ENCODE measurements at regions of chr5 and their contacts with region 1.

Region 1: DNA sequence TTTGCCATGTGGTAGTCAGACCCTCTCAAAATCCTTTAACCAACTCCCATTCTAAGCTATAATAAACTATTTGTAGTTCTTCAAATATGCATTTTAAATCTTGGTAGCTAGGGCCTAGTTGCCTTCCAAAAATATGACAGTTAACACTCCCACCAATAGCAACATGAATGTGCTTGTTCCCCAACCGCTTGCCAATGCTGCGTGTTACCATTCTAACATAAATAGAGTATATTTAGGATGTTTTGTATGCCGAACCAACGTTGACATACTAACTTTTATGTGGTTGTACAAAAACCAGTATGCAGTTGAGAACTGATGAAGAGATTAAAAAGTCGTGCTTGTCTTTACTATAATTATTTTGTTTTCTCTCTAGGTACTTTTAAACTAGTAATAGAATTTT is 9.0 kb downstream of the UBE2B start:
- DNase-seq: no peak
- H3K4me3 ChIP-seq: no peak overlapping the region
- H3K27ac ChIP-seq: no peak overlapping the region
- H3K4me1 ChIP-seq: peaks cover 5 to 20% of the 10 kb centered on the region in 2 donors
- H3K27me3 ChIP-seq: no peaks in the 10 kb centered on the region
- CTCF ChIP-seq: no peak
- POLR2A ChIP-seq: no peak

Region 2: GRCh38 chr5:134477462-134478250 is 97.3 kb after region 1 on chr5:
- intact Hi-C with region 1: no loop called
- DNase-seq: peak in 1 of 7 donors; percentile 48
- H3K4me3 ChIP-seq: no peak overlapping the region
- H3K27ac ChIP-seq: no peak overlapping the region
- H3K4me1 ChIP-seq: no peaks in the 10 kb centered on the region
- H3K27me3 ChIP-seq: no peaks in the 10 kb centered on the region
- CTCF ChIP-seq: no peak
- POLR2A ChIP-seq: no peak

Region 3: GRCh38 chr5:134561871-134562296 is 181.5 kb after region 1 on chr5:
- intact Hi-C with region 1: no loop called
- DNase-seq: peak; percentile 83 to 98 (median 96)
- H3K4me3 ChIP-seq: no peak overlapping the region
- H3K27ac ChIP-seq: peak overlapping the region in 3 of 5 donors; percentile 64 to 75 (median 75)
- H3K4me1 ChIP-seq: peaks cover 19 to 22% of the 10 kb centered on the region in 2 donors
- H3K27me3 ChIP-seq: no peaks in the 10 kb centered on the region
- CTCF ChIP-seq: peak; percentile 17 to 44 (median 35)
- POLR2A ChIP-seq: peak in 1 of 2 donors; percentile 58

Region 4: DNA sequence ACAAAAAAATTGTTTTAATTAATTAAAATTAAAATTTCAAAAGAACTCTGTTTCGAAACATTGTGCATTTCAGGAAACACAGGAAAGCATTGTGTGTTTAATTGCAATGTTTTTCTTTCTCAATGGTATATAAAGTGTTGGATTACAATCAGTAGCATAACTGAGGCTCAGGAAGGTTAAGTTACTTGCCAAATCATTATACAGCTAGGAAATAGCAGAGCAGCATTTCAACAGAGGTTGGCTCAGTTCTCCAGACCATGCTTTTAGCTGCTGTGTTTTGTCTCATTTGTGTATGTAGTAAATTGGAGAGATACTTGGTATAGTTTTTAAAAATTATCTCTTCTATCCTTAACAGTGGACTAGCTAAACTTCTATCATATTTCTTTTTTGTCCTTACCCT is 328.0 kb after region 1 on chr5:
- intact Hi-C with region 1: loop called in 1 of 2 experiments (anchors 10 kb)
- DNase-seq: no peak
- H3K4me3 ChIP-seq: no peak overlapping the region
- H3K27ac ChIP-seq: no peak overlapping the region
- H3K4me1 ChIP-seq: no peaks in the 10 kb centered on the region
- H3K27me3 ChIP-seq: no peaks in the 10 kb centered on the region
- CTCF ChIP-seq: no peak
- POLR2A ChIP-seq: no peak

Measured in adrenal gland (tissue), 19 donors.